Activated CD4-positive, alpha-beta T cell treated with anti-CD3 and anti-CD28 coated beads for 36 hours (primary cell): ENCODE measurements at regions of chr7 and their contacts with region 1.

Region 1: GRCh38 chr7:2314209-2314955 is at the start of gene SNX8:
- DNase-seq: peak; percentile 97
- ATAC-seq: peak; percentile 89
- H3K4me3 Mint-ChIP-seq: no peak within 1 kb of the TSS
- H3K27ac Mint-ChIP-seq: peak within 1 kb of the TSS; percentile 62
- H3K4me1 Mint-ChIP-seq: peaks cover 8% of the 10 kb centered on the region
- H3K27me3 Mint-ChIP-seq: no peaks in the 10 kb centered on the region
- total RNA-seq, gene SNX8: 37.1 to 42.4 TPM

Region 2: DNA sequence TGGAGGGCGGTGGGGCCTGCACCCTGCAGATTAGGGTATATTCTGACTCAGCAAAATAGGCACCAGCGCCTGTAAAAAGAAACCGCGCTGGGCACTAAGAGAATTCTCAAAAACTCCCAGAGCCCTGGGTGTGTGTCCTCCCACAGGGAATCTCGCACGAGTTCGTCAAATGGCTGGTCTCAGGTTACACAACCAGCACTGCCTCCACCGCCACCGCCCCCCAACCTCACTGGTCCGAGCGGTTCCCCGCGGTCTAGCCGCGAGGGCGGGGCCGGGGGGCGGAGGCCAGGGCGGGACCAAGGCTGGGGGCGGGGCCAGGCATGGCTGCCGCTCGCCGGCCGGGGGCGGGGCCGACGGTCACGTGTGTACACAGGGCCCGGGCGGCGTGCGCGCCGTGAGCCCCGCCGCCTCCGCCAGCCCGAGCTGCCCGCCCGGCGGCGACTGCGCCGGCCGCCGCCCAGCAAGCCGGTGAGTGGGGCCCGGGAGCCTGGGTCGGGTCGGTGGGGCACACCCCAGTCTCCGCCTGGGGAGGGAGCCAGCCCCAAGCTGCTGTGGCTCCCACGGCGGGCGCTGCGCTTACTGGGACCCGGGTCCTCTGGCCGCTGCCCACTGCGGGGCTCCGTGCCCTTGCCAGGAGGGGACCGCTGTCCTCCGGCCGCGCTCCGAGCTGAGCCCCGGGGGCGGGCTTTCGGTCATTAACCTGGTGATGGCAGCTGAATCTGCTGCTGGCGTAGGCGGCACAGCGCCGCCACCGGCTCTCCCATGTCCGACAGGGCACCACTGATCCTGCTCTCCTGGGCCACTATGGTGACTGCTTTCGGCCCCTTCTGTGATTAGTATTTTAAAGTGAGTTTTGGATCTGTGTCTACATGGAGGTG is 1270.0 kb before region 1 on chr7 and contains the start of gene GPR146:
- CTCF ChIA-PET with region 1: no interaction called
- POLR2A ChIA-PET with region 1: no interaction called
- intact Hi-C with region 1: loop called in 1 of 2 experiments (anchors 5 kb)
- DNase-seq: peak; percentile 96
- ATAC-seq: peak; percentile 88
- H3K4me3 Mint-ChIP-seq: peak within 1 kb of the TSS; percentile 78
- H3K27ac Mint-ChIP-seq: peak within 1 kb of the TSS; percentile 73
- H3K4me1 Mint-ChIP-seq: peaks cover 61% of the 10 kb centered on the region
- H3K27me3 Mint-ChIP-seq: no peaks in the 10 kb centered on the region
- total RNA-seq, gene GPR146: 4.7 to 5.6 TPM

Region 3: DNA sequence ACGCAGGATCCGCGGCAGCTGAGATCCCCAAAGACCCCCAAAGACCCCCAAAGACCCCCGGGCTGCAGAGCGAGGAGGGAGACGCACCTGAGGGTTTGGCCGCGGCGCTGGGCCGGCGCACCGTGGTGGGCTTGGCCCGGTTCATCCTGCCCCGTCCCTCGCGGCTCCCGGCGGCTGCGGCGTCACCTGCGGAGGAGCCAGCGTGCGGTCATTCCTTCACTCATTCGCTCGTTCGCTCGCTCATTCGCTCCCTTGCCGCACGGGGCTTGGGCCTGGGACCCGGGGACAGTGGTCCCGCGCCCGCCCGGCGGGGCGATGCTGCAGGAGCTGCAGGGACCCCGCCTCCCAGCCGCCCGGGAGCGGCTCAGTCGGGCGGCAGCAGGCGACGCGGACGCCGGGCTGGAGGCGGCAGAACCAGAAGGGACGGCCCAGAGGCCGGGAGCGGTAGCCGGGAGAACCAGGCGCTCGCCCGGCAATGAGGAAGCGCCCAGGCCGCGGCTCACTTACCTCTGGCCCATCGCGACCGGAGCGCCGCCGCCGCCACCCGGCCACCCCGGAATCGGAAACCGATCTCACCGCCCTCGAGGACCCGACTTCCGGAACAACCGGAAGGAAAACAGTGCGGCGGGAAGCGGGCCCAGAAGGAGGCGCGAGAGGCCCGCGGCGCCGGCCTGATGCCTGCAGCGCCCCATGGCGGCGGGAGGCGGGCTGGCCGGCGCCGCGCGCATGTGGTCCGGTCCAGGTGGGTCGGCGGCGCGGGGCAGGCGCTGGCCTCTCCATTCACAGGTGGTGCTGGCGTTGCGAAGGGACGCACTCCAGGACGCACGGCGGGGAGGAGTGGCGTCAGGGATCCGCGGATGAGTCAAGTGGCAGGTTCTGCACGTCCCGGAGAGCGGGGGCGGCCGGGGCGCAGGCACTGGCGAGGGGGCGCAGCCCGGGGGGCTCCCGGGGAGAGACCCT is 810.3 kb before region 1 on chr7 and contains the start of gene INTS1:
- CTCF ChIA-PET with region 1: no interaction called
- POLR2A ChIA-PET with region 1: no interaction called
- intact Hi-C with region 1: loop called in 1 of 2 experiments (anchors 1 kb)
- DNase-seq: peak; percentile 95
- ATAC-seq: peak; percentile 88
- H3K4me3 Mint-ChIP-seq: peak within 1 kb of the TSS; percentile 85
- H3K27ac Mint-ChIP-seq: peak within 1 kb of the TSS; percentile 87
- H3K4me1 Mint-ChIP-seq: peaks cover 41% of the 10 kb centered on the region
- H3K27me3 Mint-ChIP-seq: no peaks in the 10 kb centered on the region
- total RNA-seq, gene INTS1: 78.1 to 81.7 TPM

Region 4: GRCh38 chr7:1940402-1940786 is 374.0 kb before region 1 on chr7:
- CTCF ChIA-PET with region 1: no interaction called
- POLR2A ChIA-PET with region 1: no interaction called
- intact Hi-C with region 1: loop called in 1 of 2 experiments (anchors 1 kb)
- DNase-seq: peak; percentile 96
- ATAC-seq: peak; percentile 90
- H3K4me3 Mint-ChIP-seq: peak overlapping the region; percentile 81
- H3K27ac Mint-ChIP-seq: peak overlapping the region; percentile 93
- H3K4me1 Mint-ChIP-seq: peaks cover 74% of the 10 kb centered on the region
- H3K27me3 Mint-ChIP-seq: no peaks in the 10 kb centered on the region

Region 5: GRCh38 chr7:2241580-2242540 is 72.5 kb before region 1 on chr7 and contains the starts of genes MRM2 and NUDT1:
- CTCF ChIA-PET with region 1: no interaction called
- POLR2A ChIA-PET with region 1: no interaction called
- intact Hi-C with region 1: loop called in 1 of 2 experiments (anchors 1 kb)
- DNase-seq: peak; percentile 84
- ATAC-seq: peak; percentile 82
- H3K4me3 Mint-ChIP-seq: peak within 1 kb of the TSS; percentile 88
- H3K27ac Mint-ChIP-seq: peak within 1 kb of the TSS; percentile 88
- H3K4me1 Mint-ChIP-seq: peaks cover 10% of the 10 kb centered on the region
- H3K27me3 Mint-ChIP-seq: no peaks in the 10 kb centered on the region
- total RNA-seq, gene MRM2: 28.7 to 32.1 TPM
- total RNA-seq, gene NUDT1: 52.5 to 100 TPM

Region 6: GRCh38 chr7:2555121-2556052 is 241.0 kb after region 1 on chr7 and contains the start of gene BRAT1:
- CTCF ChIA-PET with region 1: no interaction called
- POLR2A ChIA-PET with region 1: no interaction called
- intact Hi-C with region 1: loop called in 1 of 2 experiments (anchors 1 kb)
- DNase-seq: peak; percentile 99
- ATAC-seq: peak; percentile 89
- H3K4me3 Mint-ChIP-seq: peak within 1 kb of the TSS; percentile 89
- H3K27ac Mint-ChIP-seq: peak within 1 kb of the TSS; percentile 85
- H3K4me1 Mint-ChIP-seq: peaks cover 33% of the 10 kb centered on the region
- H3K27me3 Mint-ChIP-seq: no peaks in the 10 kb centered on the region
- total RNA-seq, gene BRAT1: 34.7 to 35.9 TPM